Right cardiac atrium (tissue), 5 donors: ENCODE measurements at regions of chr17 and their contacts with region 1.

Region 1: DNA sequence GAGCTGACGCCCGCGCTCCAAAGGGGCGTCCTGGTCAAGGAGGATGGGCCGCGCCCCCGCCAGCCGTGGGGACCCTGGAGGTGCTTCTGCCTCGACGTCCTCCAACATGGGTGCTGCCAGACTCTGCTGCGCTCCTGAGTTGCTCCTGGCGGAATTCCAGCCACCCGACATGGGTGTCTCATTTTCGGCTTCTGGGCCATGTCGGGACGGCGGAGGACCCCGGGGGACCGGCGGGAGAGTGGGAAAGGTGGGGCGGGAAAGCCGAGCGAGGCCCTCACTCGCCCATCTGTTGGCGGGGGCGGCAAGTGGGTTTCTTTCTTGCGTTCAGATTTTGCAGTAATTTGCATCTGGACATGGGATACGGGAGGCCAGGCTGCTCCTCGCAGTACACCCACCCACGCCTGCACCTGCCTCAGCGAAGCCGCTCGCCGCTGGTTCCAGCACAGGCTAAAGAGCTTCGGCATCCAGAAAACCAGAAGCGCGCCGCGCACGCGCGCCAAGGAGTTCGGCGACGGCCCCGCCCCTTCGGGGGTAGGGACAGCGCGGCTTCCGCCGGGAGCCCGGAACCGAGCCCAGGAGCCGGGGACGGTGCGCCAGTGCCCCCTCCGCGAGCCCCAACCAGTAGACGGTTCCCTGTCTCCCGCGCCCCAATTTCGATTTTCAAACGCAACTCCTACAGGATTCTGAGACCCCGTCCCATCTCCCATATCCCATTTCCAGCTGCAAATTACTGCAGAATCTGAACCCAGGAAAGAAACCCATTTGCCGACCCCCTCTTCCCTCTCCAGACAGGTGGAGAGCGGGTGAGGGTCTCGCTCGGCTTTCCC is at the start of gene ARMC7:
- DNase-seq: peak; percentile 88 to 98 (median 97)
- ATAC-seq: peak; percentile 79 to 91
- H3K4me3 ChIP-seq: peak within 1 kb of the TSS; percentile 80
- H3K27ac ChIP-seq: peak within 1 kb of the TSS; percentile 61
- H3K4me1 ChIP-seq: peaks cover 2% of the 10 kb centered on the region
- H3K27me3 ChIP-seq: no peaks in the 10 kb centered on the region
- total RNA-seq, gene ARMC7: 9.4 to 10.9 (median 9.6) TPM

Region 2: GRCh38 chr17:75059369-75060345 is 50.0 kb before region 1 on chr17:
- intact Hi-C with region 1: loop called in 2 of 4 experiments (anchors 10 kb)
- DNase-seq: peak in 1 of 3 donors; percentile 70
- ATAC-seq: peak; percentile 81 to 85
- H3K4me3 ChIP-seq: no peak overlapping the region
- H3K27ac ChIP-seq: peak overlapping the region; percentile 3
- H3K4me1 ChIP-seq: no peaks in the 10 kb centered on the region
- H3K27me3 ChIP-seq: no peaks in the 10 kb centered on the region

Region 3: GRCh38 chr17:75173526-75173925 is 63.9 kb after region 1 on chr17:
- intact Hi-C with region 1: loop called in 3 of 4 experiments (anchors 5 to 10 kb)
- DNase-seq: no peak
- ATAC-seq: no peak
- H3K4me3 ChIP-seq: no peak overlapping the region
- H3K27ac ChIP-seq: peak overlapping the region; percentile 26
- H3K4me1 ChIP-seq: no peaks in the 10 kb centered on the region
- H3K27me3 ChIP-seq: no peaks in the 10 kb centered on the region

Region 4: GRCh38 chr17:75199886-75200618 is 90.4 kb after region 1 on chr17:
- intact Hi-C with region 1: loop called in 3 of 4 experiments (anchors 5 to 10 kb)
- DNase-seq: no peak
- ATAC-seq: no peak
- H3K4me3 ChIP-seq: no peak overlapping the region
- H3K27ac ChIP-seq: no peak overlapping the region
- H3K4me1 ChIP-seq: no peaks in the 10 kb centered on the region
- H3K27me3 ChIP-seq: no peaks in the 10 kb centered on the region

Region 5: DNA sequence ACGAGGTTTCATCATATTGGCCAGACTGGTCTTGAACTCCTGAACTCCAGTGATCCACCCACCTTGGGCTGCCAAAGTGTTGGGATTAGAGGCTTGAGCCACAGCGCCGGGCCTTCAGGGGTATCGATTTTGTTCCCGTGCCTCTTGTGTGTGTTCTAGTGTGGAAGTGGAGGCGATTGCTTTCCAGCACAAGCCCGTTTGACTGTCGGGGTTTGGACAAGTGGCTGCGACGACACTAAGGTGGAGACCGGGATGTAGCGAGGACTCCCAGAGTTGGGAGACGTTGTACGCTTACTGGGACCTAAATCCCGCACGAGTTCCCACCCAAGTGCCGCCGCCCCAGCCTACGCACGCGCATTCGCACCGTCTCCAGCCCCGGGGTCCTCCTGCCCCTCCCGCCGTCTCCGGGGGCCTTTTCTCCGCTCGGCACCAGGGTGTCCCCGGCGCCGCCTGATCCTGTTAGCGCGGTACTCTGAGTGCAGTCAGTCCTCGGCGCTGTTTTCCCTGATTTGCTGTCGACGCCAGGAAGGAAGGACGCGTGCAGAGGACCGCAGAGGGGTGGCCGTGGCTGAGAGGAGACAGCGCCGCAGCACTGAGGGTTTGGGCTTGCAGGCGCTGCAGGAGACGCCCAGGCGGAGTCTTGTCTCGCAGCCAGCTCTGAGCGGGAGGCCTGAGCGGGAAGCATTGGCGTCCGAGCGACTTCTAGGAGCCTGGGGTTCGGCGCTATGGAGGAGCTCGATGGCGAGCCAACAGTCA is 95.6 kb after region 1 on chr17 and contains the start of gene NUP85:
- intact Hi-C with region 1: loop called in 3 of 4 experiments (anchors 5 to 10 kb)
- DNase-seq: peak; percentile 96 to 98 (median 98)
- ATAC-seq: peak; percentile 96 to 97
- H3K4me3 ChIP-seq: peak within 1 kb of the TSS; percentile 95
- H3K27ac ChIP-seq: peak within 1 kb of the TSS; percentile 91
- H3K4me1 ChIP-seq: no peaks in the 10 kb centered on the region
- H3K27me3 ChIP-seq: no peaks in the 10 kb centered on the region
- total RNA-seq, gene NUP85: 31.3 to 36.1 (median 34.2) TPM